Naive thymus-derived CD4-positive, alpha-beta T cell (primary cell): ENCODE measurements at regions of chr1 and their contacts with region 1.

Region 1: DNA sequence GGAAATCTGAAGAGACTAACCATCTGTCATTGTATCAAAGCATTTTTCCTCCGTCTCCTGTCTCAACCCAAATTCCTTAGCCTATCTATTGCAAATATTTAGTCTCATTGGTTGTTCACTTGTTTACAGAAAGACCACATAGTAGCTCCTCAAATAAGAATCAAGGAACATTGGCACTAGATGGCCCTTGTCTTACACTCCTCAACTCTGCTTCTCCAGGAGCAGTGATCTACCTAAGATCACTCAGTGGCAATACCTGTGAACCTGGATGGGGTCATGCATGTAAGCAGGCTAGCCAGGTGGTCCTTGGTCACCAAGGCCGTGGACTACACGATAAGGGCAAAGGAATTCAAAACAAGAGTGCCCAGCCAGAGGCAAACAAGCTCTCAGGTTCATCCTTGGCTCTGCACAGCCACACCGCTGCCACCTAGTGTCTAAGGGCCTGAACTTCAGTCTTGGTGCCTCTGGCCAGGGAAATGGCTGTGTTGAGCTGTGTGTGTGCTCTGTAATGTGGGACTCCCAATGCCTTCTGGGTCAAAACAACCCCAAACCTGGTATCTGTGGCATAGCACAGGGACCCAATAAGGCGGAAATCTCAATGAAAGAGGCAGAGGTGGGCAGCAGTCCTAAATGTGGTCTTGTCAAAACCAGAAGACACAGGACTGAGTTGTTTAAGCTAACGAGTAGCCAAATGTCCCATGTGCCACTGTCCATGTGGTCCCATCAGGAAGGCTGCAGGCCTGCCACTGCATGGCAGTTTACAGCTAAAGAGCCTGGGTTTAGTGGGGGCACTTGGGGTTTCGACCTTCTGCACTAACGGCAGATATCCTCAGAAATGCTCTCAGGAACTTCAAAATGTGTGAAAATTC is 54.5 kb downstream of the GPR161 start:
- DNase-seq: peak in 8 of 9 donors; percentile 29 to 66 (median 48)
- ATAC-seq: peak; percentile 83
- H3K4me3 ChIP-seq: no peak overlapping the region
- H3K4me3 Mint-ChIP-seq: no peak overlapping the region
- H3K27ac ChIP-seq: no peak overlapping the region
- H3K27ac Mint-ChIP-seq: peak overlapping the region in 1 of 9 donors; percentile 54
- H3K4me1 ChIP-seq: no peaks in the 10 kb centered on the region
- H3K4me1 Mint-ChIP-seq: peaks cover 0 to 12% (median 0%) of the 10 kb centered on the region in 7 donors
- H3K27me3 ChIP-seq: no peaks in the 10 kb centered on the region
- H3K27me3 Mint-ChIP-seq: no peaks in the 10 kb centered on the region

Region 2: GRCh38 chr1:167721617-167722151 is 360.6 kb before region 1 on chr1 and contains the start of gene MPZL1:
- CTCF ChIA-PET with region 1: interaction called, 3 read pairs
- POLR2A ChIA-PET with region 1: no interaction called
- intact Hi-C with region 1: loop called (anchors 5 kb)
- DNase-seq: peak; percentile 81 to 96 (median 88)
- ATAC-seq: peak; percentile 99
- H3K4me3 ChIP-seq: peak within 1 kb of the TSS; percentile 64
- H3K4me3 Mint-ChIP-seq: peak within 1 kb of the TSS; percentile 85 to 96 (median 91)
- H3K27ac ChIP-seq: peak within 1 kb of the TSS; percentile 70
- H3K27ac Mint-ChIP-seq: peak within 1 kb of the TSS; percentile 75 to 95 (median 86)
- H3K4me1 ChIP-seq: peaks cover 5 to 18% of the 10 kb centered on the region in 2 donors
- H3K4me1 Mint-ChIP-seq: peaks cover 35 to 76% (median 65%) of the 10 kb centered on the region in 7 donors
- H3K27me3 ChIP-seq: no peaks in the 10 kb centered on the region
- H3K27me3 Mint-ChIP-seq: peaks cover 0 to 5% (median 0%) of the 10 kb centered on the region in 5 donors
- total RNA-seq, gene MPZL1: 4.8 to 25.3 (median 8.6) TPM

Region 3: GRCh38 chr1:168145184-168146159 is 63.2 kb after region 1 on chr1:
- CTCF ChIA-PET with region 1: interaction called, 3 read pairs
- POLR2A ChIA-PET with region 1: no interaction called
- intact Hi-C with region 1: loop called (anchors 1 to 2 kb)
- DNase-seq: peak; percentile 58 to 85 (median 73)
- ATAC-seq: peak; percentile 98
- H3K4me3 ChIP-seq: no peak overlapping the region
- H3K4me3 Mint-ChIP-seq: peak overlapping the region in 8 of 10 donors; percentile 16 to 62 (median 52)
- H3K27ac ChIP-seq: no peak overlapping the region
- H3K27ac Mint-ChIP-seq: peak overlapping the region in 1 of 9 donors; percentile 57
- H3K4me1 ChIP-seq: peaks cover 0 to 6% of the 10 kb centered on the region in 2 donors
- H3K4me1 Mint-ChIP-seq: peaks cover 4 to 23% (median 9%) of the 10 kb centered on the region in 7 donors
- H3K27me3 ChIP-seq: no peaks in the 10 kb centered on the region
- H3K27me3 Mint-ChIP-seq: peaks cover 0 to 19% (median 0%) of the 10 kb centered on the region in 5 donors

Region 4: DNA sequence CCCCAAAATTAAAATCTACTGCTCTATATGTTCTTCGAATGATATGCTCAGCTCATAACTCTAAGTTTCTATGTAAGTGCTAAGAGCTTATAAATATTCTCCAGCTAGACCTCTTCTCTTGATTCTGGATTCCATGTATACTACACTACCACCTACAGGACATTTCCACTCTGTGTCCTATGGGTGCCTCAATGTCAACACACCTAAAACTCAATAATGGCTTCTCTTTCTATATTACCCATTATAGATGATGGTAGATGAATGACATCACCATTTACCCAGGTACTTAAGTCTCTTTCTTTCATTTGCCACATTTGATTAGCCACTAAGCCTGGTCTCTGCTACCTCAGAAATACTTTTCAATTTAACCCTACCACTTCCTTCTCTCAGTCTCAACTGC is 239.7 kb after region 1 on chr1:
- CTCF ChIA-PET with region 1: no interaction called
- POLR2A ChIA-PET with region 1: no interaction called
- intact Hi-C with region 1: loop called in 1 of 2 experiments (anchors 2 kb)
- DNase-seq: no peak
- ATAC-seq: no peak
- H3K4me3 ChIP-seq: no peak overlapping the region
- H3K4me3 Mint-ChIP-seq: no peak overlapping the region
- H3K27ac ChIP-seq: no peak overlapping the region
- H3K27ac Mint-ChIP-seq: no peak overlapping the region
- H3K4me1 ChIP-seq: peaks cover 0 to 3% of the 10 kb centered on the region in 2 donors
- H3K4me1 Mint-ChIP-seq: peaks cover 0 to 28% (median 0%) of the 10 kb centered on the region in 7 donors
- H3K27me3 ChIP-seq: no peaks in the 10 kb centered on the region
- H3K27me3 Mint-ChIP-seq: no peaks in the 10 kb centered on the region